ENCODE measurements at regions of chr7 and their contacts with region 1.

Region 1: DNA sequence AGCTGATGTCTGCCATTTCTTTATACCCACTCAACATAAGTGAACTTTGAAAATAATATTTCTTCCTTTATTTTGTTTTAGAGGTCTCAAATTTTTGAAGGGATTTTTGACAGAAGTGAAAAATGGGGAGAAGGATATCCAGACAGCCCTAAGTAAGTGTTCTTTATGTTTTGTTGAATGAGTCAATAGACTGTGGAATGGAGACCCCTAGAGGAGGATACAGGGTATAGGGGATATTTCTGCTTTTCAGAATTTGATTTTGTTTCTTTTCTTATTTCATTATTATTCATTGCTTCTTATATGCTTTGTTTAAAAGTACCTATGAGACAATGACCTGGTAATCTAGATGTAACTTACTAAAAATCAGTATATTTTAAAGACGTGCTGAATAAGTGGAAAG is 34.4 kb downstream of the PLEKHA8 start:
- DNase-seq: peak; percentile 42
- H3K4me3 ChIP-seq: no peak overlapping the region
- H3K27ac ChIP-seq: no peak overlapping the region
- H3K4me1 ChIP-seq: no peaks in the 10 kb centered on the region
- H3K27me3 ChIP-seq: no peaks in the 10 kb centered on the region
- CTCF ChIP-seq: peak; percentile 39 to 50
- POLR2A ChIP-seq: no peak

Region 2: GRCh38 chr7:29748286-29749108 is 314.1 kb before region 1 on chr7:
- CTCF ChIA-PET with region 1: interaction called, 26 read pairs
- POLR2A ChIA-PET with region 1: no interaction called
- dilution Hi-C with region 1: no loop called
- intact Hi-C with region 1: loop called (anchors 1 kb)
- DNase-seq: peak; percentile 44
- H3K4me3 ChIP-seq: no peak overlapping the region
- H3K27ac ChIP-seq: no peak overlapping the region
- H3K4me1 ChIP-seq: peaks cover 5% of the 10 kb centered on the region
- H3K27me3 ChIP-seq: peaks cover 0 to 2% of the 10 kb centered on the region in 2 experiments
- CTCF ChIP-seq: peak; percentile 33 to 36
- POLR2A ChIP-seq: no peak

Region 3: DNA sequence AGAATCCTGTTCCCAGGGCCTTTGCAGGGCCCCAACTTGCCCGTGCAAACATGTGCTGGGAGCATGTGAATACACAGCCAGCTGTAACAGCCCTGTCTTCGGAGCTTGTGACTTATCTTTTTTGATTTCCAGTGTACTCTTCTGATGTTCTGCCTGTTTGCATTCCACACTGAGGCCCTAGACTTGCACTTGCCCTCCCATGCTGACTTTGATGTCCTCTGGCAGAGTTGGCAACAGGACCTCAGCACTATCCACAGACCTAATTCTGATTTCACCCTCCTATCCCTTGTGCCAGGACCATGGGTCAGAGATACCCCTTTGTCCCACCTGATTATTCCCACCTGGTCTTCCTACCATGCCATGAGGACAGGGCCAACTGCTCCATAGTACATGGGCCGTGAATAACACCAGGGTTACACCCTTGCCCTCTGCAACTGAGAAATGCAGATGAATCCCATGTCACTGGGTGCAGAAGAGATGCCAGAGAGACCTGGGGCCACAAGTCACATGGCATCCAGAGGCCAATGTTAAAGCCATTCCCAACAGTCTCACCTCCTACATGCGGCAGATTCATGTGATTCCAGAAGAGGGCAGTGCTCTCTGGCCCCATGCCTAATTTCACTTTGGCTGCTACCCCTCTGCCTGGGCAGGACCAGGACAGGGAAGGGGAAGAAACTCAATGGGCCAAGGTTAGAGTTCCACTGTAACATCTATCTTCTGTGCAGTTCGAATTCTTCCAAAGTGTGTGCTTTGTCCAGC is 116.0 kb before region 1 on chr7:
- CTCF ChIA-PET with region 1: interaction called, 20 read pairs
- POLR2A ChIA-PET with region 1: no interaction called
- dilution Hi-C with region 1: no loop called
- intact Hi-C with region 1: loop called (anchors 1 kb)
- DNase-seq: peak; percentile 40
- H3K4me3 ChIP-seq: no peak overlapping the region
- H3K27ac ChIP-seq: no peak overlapping the region
- H3K4me1 ChIP-seq: no peaks in the 10 kb centered on the region
- H3K27me3 ChIP-seq: no peaks in the 10 kb centered on the region
- CTCF ChIP-seq: peak; percentile 41 to 46
- POLR2A ChIP-seq: no peak

Region 4: GRCh38 chr7:29988424-29989256 is 74.0 kb before region 1 on chr7:
- CTCF ChIA-PET with region 1: interaction called, 8 read pairs
- POLR2A ChIA-PET with region 1: no interaction called
- dilution Hi-C with region 1: no loop called
- intact Hi-C with region 1: loop called (anchors 1 kb)
- DNase-seq: peak; percentile 47
- H3K4me3 ChIP-seq: peak overlapping the region; percentile 65 to 88 (median 87)
- H3K27ac ChIP-seq: peak overlapping the region; percentile 93
- H3K4me1 ChIP-seq: peaks cover 22% of the 10 kb centered on the region
- H3K27me3 ChIP-seq: no peaks in the 10 kb centered on the region
- CTCF ChIP-seq: no peak
- POLR2A ChIP-seq: no peak

Region 5: DNA sequence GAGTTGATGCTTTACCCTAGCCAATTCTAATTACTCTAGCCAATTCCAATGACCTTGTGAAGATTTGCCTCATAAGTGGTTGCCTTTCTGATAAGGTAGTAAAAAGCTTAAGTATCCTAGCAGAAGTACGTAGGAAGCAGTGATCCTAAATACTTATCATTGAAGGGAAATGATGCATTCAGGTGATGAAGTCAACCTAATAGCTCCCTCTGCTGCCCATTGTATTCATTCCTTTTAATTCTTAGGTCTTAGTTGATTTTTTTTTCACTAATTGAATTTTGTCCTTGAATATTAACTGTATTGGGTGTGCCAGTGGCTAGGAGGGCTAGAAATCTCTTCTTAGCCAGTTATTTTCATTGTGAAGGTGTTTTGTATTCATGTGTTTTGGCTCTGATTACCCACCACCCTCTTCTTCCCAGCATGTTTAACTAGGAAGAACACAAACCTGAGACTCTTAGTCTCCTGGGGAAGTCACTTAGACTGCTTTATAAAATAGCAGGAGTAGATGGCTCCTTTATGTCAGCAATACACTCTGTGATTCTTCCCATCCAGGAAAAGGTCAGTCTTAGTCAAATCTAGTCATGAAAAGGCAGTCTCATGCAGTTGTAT is 11.9 kb after region 1 on chr7:
- CTCF ChIA-PET with region 1: interaction called, 55 read pairs
- POLR2A ChIA-PET with region 1: no interaction called
- dilution Hi-C with region 1: no loop called
- intact Hi-C with region 1: no loop called
- DNase-seq: peak; percentile 52
- H3K4me3 ChIP-seq: no peak overlapping the region
- H3K27ac ChIP-seq: no peak overlapping the region
- H3K4me1 ChIP-seq: no peaks in the 10 kb centered on the region
- H3K27me3 ChIP-seq: no peaks in the 10 kb centered on the region
- CTCF ChIP-seq: peak; percentile 25 to 38
- POLR2A ChIP-seq: no peak

Measured in endothelial cell of umbilical vein (primary cell).